Right ventricle myocardium inferior (tissue), 1 donor: ENCODE measurements at regions of chr18 and their contacts with region 1.

Region 1: GRCh38 chr18:7288544-7288943 is 57.7 kb downstream of the LRRC30 start:
- DNase-seq: no peak
- ATAC-seq: no peak

Region 2: DNA sequence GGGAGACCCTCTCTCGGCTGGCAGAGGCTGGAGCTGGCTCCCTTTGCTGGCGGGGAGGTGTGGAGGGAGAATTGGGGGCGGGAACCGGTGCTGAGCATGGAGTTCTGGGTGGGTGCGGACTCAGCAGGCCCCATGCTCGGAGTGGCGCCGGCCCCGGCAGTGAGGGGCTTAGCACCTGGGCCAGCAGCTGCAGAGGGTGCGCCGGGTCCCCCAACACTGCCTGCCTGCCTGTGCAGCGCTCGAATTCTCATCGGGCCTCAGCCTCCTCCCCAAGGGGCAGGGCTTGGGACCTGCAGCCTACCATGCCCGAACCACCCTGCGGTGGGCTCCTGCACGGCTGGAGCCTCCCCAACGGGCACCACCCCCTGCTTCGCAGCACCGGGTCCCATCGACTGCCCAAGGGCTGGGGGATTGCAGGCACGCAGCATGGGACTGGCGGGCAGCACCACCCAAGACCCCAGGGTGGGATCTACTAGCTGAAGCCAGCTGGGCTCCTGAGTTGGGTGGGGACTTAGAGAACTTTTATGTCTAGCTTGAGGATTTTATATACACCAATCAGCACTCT is 72.1 kb after region 1 on chr18:
- intact Hi-C with region 1: loop called (anchors 5 kb)
- DNase-seq: no peak
- ATAC-seq: peak; percentile 26

Region 3: DNA sequence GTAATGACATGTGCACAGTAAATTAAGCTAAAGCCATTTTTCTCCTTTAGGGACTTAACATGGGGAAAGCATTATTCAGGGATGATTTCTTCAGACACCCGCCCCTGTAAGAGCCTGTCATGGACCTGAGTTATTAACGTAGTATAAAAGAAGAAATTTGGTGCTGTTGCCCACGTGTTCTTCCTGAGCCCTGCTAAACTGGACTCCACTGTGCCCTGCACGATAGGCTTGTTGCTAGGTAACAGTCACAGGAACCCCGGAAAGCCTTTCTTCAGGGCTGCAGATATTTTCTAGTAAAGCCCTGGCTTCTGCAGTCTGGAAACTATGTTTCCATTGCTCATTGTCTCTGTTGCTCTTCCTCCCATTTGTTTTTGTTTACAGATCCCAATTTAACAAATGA is 100.2 kb after region 1 on chr18:
- intact Hi-C with region 1: no loop called
- DNase-seq: no peak
- ATAC-seq: no peak